ENCODE measurements at regions of chr6 and their contacts with region 1.

Region 1: GRCh38 chr6:149499066-149499465 is 14.3 kb upstream of the ZC3H12D start:
- DNase-seq: no peak
- H3K4me3 Mint-ChIP-seq: no peak overlapping the region
- H3K27ac Mint-ChIP-seq: peak overlapping the region; percentile 97
- H3K4me1 Mint-ChIP-seq: peaks cover 82% of the 10 kb centered on the region
- H3K27me3 Mint-ChIP-seq: no peaks in the 10 kb centered on the region

Region 2: GRCh38 chr6:148835920-148836441 is 663.1 kb before region 1 on chr6:
- CTCF ChIA-PET with region 1: no interaction called
- POLR2A ChIA-PET with region 1: no interaction called
- intact Hi-C with region 1: loop called (anchors 10 kb)
- DNase-seq: peak; percentile 71
- H3K4me3 Mint-ChIP-seq: peak overlapping the region; percentile 36
- H3K27ac Mint-ChIP-seq: peak overlapping the region; percentile 79
- H3K4me1 Mint-ChIP-seq: peaks cover 49% of the 10 kb centered on the region
- H3K27me3 Mint-ChIP-seq: peaks cover 5% of the 10 kb centered on the region

Measured in activated CD4-positive, alpha-beta memory T cell treated with anti-CD3 and anti-CD28 coated beads for 36 hours (primary cell).